Activated T-helper 2 cell treated with anti-CD3 and anti-CD28 coated beads, Interferon-gamma antibody, Interleukin-2, Interleukin-4, amounts not matched to agents 10 μg/mL and 5 μg/mL and 100 μg/mL, durations not matched to agents 14 hours and 24 hours and 36 hours (primary cell): ENCODE measurements at regions of chr9 and their contacts with region 1.

Region 1: DNA sequence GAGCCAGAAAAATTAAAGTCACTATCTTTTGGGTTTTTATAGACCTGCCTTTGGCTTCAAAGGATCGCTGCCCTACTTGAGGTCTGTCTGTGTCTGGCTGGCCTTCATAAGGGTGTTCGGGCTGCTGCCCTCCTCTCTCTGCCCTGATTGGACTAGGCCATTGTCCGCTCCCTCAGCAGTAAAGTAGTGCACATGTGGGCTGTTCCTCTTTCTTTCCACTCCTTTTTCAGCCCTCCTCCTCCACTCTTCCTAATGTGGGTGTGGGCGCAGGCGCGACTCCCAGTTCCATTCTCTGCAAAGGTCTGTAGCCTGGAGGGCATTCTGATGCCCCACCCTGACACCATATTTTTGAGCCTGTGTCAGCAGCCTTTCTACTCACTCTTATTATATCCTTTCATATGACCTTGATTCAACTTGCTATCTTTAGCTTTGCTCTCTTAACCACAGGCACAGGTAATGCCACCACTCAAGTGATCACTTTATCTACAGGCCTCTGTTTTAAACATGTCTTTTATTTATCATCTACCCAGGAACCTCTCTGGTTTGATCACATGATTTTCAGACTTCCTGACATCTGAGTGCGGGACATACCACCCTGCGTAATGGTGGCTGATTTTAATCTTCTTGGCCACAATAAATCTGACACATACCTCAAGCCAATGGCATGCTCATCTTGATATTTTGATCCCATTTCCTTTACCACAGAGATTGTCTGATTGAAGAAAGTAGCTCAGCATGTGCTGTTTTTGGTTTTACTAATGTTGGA is 144.5 kb downstream of the AOPEP start:
- DNase-seq: peak; percentile 44
- H3K4me3 Mint-ChIP-seq: peak overlapping the region; percentile 51
- H3K27ac Mint-ChIP-seq: peak overlapping the region; percentile 76
- H3K4me1 Mint-ChIP-seq: peaks cover 50% of the 10 kb centered on the region
- H3K27me3 Mint-ChIP-seq: peaks cover 46% of the 10 kb centered on the region

Region 2: GRCh38 chr9:94726495-94727191 is 144.3 kb before region 1 on chr9 and contains the start of gene AOPEP:
- intact Hi-C with region 1: loop called (anchors 10 kb)
- DNase-seq: peak; percentile 98
- H3K4me3 Mint-ChIP-seq: peak within 1 kb of the TSS; percentile 91
- H3K27ac Mint-ChIP-seq: peak within 1 kb of the TSS; percentile 94
- H3K4me1 Mint-ChIP-seq: peaks cover 15% of the 10 kb centered on the region
- H3K27me3 Mint-ChIP-seq: no peaks in the 10 kb centered on the region
- total RNA-seq, gene AOPEP: 24.6 and 27.6 TPM in 2 replicates

Region 3: DNA sequence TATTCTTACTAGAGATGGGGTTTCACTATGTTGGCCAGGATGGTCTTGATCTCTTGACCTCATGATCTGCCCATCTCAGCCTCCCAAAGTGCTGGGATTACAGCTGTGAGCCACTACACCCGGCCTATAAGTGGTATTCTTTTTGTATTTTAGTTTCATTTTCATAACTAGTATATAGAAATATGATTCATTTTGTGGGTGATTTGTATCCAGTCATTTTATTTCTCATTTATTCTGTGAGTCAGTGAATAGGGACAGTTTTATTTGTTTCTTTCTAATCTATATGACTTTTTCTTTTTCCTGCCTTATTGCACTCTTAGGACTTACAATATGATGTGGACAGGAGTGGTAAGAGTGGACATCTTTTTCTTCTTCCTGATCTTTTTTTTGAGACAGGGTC is 31.6 kb before region 1 on chr9:
- intact Hi-C with region 1: loop called (anchors 2 kb)
- DNase-seq: no peak
- H3K4me3 Mint-ChIP-seq: no peak overlapping the region
- H3K27ac Mint-ChIP-seq: no peak overlapping the region
- H3K4me1 Mint-ChIP-seq: peaks cover 23% of the 10 kb centered on the region
- H3K27me3 Mint-ChIP-seq: no peaks in the 10 kb centered on the region

Region 4: DNA sequence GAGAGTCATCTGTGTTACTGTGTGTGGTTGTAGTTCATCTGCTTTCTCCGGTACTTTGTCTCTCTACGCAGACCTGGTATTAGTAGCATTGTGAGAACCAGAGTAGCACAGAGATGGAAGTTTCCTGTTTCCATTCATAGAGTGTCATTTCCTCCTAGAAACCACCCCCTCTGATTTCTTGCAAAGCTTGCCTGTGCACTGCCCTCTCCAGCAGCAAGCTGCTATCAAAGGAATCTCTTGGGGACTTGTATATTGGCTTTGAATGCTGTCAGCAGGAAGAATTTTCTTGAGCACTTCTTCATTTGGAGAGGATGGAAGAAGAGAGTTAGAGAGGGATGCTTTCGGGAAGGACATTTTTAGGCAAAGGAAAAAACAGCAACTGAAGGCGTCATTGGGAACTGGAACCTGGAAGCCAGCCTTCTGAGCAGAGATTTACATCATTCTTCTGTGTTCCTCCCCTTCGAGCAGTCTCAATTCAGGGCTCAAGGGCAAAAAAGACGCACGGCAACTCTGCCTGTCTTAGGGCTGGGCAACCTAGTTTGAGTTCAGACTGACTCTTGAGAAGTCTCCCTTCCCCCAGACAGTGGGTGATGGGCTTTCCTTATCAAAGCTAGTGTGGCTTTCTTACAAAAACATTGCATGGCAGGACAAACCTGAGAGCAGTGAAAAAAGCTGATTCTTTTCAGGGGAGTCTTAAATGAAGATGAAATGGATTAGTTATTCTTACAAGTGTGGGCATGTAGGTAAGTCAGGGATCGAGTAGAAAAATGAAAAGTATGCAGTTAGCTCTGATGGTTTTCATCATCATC is 81.8 kb after region 1 on chr9:
- intact Hi-C with region 1: loop called (anchors 2 kb)
- DNase-seq: no peak
- H3K4me3 Mint-ChIP-seq: no peak overlapping the region
- H3K27ac Mint-ChIP-seq: no peak overlapping the region
- H3K4me1 Mint-ChIP-seq: peaks cover 31% of the 10 kb centered on the region
- H3K27me3 Mint-ChIP-seq: no peaks in the 10 kb centered on the region

Region 5: DNA sequence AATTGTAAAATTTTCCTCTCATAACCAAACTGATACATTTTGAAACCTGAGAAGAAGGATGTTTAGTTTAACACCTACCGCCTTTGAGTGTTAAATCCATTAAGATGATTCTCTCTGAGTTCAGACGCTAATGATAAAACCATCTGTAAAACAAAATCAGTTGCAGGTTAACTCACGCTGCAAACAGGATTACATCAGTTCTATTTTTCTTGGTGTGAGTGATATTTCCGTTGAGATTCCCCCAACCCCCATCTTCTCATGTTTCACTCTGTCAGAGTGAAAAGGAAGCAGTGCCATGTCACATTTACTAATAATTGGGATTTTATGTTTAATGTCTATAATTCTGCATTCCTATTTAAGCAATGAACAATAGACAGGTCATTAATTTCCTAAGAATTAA is 300.0 kb after region 1 on chr9:
- intact Hi-C with region 1: loop called (anchors 5 kb)
- DNase-seq: no peak
- H3K4me3 Mint-ChIP-seq: peak overlapping the region; percentile 48
- H3K27ac Mint-ChIP-seq: peak overlapping the region; percentile 63
- H3K4me1 Mint-ChIP-seq: peaks cover 36% of the 10 kb centered on the region
- H3K27me3 Mint-ChIP-seq: no peaks in the 10 kb centered on the region